CD4-positive, alpha-beta memory T cell (primary cell): ENCODE measurements at regions of chr4 and their contacts with region 1.

Region 1: DNA sequence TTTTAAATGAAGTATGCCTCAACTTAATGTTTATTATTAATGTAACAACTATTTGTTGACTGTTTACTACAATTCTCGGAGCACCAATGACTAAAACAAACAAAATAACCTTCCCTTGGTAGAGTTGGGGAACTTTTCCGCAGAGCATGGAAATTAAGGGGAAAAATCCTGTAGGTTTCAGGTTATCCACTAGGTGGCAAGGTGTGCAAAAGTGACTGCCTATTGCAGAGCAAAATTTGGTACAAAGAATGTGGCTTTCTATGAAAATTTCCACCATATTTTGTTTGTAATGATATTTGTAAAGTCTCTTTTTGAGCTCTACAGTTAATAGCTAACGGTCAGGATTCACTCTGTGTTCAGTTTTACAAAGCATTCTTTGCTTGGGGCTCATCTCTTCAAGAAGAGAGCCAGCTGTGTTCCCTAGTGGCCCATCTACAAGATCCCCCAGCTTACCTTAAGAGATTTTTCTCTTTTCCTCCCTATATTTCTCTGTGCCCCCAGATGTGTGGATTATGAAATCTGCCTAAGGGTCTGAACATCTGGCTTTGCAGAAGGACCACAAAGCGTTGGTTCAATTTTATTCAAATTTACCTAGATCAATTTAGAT is 61.1 kb downstream of the FBXO8 start:
- DNase-seq: peak in 1 of 5 donors; percentile 18
- H3K4me3 ChIP-seq: no peak overlapping the region
- H3K4me3 Mint-ChIP-seq: no peak overlapping the region
- H3K27ac ChIP-seq: no peak overlapping the region
- H3K27ac Mint-ChIP-seq: no peak overlapping the region
- H3K4me1 ChIP-seq: peaks cover 9% of the 10 kb centered on the region
- H3K4me1 Mint-ChIP-seq: peaks cover 5 to 10% (median 10%) of the 10 kb centered on the region in 4 donors
- H3K27me3 ChIP-seq: peaks cover 13% of the 10 kb centered on the region
- H3K27me3 Mint-ChIP-seq: peaks cover 19 to 26% of the 10 kb centered on the region in 2 donors

Region 2: DNA sequence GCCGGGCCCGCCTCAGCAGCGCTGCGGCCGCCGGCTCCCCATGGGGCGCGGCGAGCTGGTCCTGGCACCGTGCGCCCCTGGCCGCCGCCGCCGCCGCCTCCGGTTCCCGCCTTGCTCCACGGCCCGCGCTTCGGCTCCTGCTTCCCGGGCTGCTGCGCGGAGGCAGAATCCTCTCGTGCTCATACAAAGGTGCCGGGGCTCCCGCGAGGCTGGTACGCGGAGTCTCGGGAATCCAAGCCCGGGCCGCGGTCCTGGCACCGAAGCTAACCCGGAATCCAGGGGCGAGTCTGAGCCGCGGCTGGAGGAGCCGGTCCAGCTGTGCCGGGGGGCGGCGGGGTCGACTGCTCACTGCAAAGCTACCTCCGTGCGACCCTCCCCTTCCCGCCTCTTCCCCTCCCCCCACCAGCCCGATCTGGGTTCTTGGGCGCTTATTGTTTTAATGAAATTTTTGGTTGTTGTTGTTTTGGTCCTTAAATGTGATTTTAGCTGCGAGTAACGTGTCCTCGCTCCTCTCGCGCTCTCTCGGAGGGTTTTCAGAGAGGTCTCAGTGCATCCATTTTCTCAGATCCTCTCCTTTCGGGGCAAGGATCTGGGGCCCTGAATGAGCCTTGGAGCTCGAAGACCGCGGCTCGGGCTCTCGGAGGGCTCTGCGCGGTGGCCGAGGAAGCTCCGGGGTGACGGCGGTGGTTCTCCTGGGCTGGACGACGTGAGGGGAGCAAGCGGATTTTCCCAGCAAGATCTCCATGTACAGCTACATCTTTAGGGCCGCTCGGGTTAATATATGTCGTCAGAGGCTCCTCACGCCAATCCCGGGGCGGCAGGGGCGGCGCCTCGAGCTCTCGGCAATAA is 692.7 kb before region 1 on chr4 and contains the start of gene HAND2:
- CTCF ChIA-PET with region 1: no interaction called
- POLR2A ChIA-PET with region 1: no interaction called
- intact Hi-C with region 1: loop called (anchors 10 kb)
- DNase-seq: no peak
- H3K4me3 ChIP-seq: no peak within 1 kb of the TSS
- H3K4me3 Mint-ChIP-seq: peak within 1 kb of the TSS; percentile 47 to 82 (median 72)
- H3K27ac ChIP-seq: no peak within 1 kb of the TSS
- H3K27ac Mint-ChIP-seq: peak within 1 kb of the TSS in 3 of 7 donors; percentile 77 to 81 (median 78)
- H3K4me1 ChIP-seq: peaks cover 15% of the 10 kb centered on the region
- H3K4me1 Mint-ChIP-seq: peaks cover 11 to 31% (median 21%) of the 10 kb centered on the region in 4 donors
- H3K27me3 ChIP-seq: peaks cover 92% of the 10 kb centered on the region
- H3K27me3 Mint-ChIP-seq: peaks cover 71 to 76% of the 10 kb centered on the region in 2 donors
- total RNA-seq, gene HAND2: not detected

Region 3: GRCh38 chr4:174282836-174283506 is 60.6 kb after region 1 on chr4:
- CTCF ChIA-PET with region 1: interaction called, 3 read pairs
- POLR2A ChIA-PET with region 1: interaction called, 3 read pairs
- intact Hi-C with region 1: loop called (anchors 5 kb)
- DNase-seq: peak; percentile 84 to 92 (median 86)
- H3K4me3 ChIP-seq: peak overlapping the region; percentile 71 to 92
- H3K4me3 Mint-ChIP-seq: peak overlapping the region; percentile 96 to 100 (median 99)
- H3K27ac ChIP-seq: peak overlapping the region; percentile 97
- H3K27ac Mint-ChIP-seq: peak overlapping the region; percentile 98 to 100 (median 100)
- H3K4me1 ChIP-seq: peaks cover 59% of the 10 kb centered on the region
- H3K4me1 Mint-ChIP-seq: peaks cover 44 to 80% (median 61%) of the 10 kb centered on the region in 4 donors
- H3K27me3 ChIP-seq: no peaks in the 10 kb centered on the region
- H3K27me3 Mint-ChIP-seq: no peaks in the 10 kb centered on the region

Region 4: DNA sequence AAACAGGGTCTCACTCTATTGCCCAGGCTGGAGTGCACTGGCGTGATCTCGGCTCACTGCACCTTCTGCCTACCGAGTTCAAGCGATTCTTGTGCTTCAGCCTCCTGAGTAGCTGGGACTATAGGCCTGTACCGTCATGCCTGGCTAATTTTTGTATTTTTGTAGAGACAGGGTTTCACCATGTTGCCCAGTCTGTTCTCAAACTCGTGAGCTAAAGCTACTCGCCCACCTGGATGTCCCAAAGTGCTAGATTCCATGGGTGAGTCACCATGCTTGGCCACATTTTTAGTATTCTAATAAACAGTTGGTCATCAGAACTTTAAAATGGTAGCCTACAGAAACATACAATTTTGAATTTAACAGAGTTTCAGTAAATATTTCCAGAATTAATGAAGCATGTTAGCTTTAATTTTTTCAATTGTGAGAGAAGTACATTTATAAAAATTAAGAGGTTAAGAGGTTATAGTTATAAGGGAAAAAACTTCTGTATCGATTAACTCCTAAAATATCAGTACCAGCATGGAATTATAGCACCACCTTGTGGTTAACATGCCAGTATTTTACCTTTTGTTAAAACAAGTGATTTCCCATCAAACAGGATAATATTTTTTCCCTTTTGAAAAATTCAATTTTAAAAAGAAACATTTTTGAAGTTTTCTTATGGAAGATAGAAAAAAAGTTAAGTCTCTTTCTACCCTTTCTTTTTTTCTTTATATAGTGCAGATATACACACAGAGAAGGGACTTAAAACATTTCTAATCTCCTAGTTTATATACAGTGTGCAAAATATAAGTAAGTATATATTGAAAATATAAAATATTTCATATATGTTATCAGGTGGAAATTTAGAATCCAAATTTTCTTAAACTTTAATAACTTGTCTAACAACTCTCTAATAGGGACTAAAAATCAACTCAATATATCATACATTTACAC is 96.7 kb after region 1 on chr4:
- CTCF ChIA-PET with region 1: interaction called, 31 read pairs
- POLR2A ChIA-PET with region 1: no interaction called
- intact Hi-C with region 1: loop called (anchors 1 kb)
- DNase-seq: peak in 4 of 5 donors; percentile 25 to 43 (median 26)
- H3K4me3 ChIP-seq: no peak overlapping the region
- H3K4me3 Mint-ChIP-seq: no peak overlapping the region
- H3K27ac ChIP-seq: no peak overlapping the region
- H3K27ac Mint-ChIP-seq: no peak overlapping the region
- H3K4me1 ChIP-seq: no peaks in the 10 kb centered on the region
- H3K4me1 Mint-ChIP-seq: no peaks in the 10 kb centered on the region
- H3K27me3 ChIP-seq: no peaks in the 10 kb centered on the region
- H3K27me3 Mint-ChIP-seq: no peaks in the 10 kb centered on the region

Region 5: GRCh38 chr4:174631901-174632758 is 409.8 kb after region 1 on chr4:
- CTCF ChIA-PET with region 1: no interaction called
- POLR2A ChIA-PET with region 1: no interaction called
- intact Hi-C with region 1: loop called (anchors 5 kb)
- DNase-seq: peak in 4 of 5 donors; percentile 4 to 25 (median 13)
- H3K4me3 ChIP-seq: no peak overlapping the region
- H3K4me3 Mint-ChIP-seq: no peak overlapping the region
- H3K27ac ChIP-seq: no peak overlapping the region
- H3K27ac Mint-ChIP-seq: no peak overlapping the region
- H3K4me1 ChIP-seq: no peaks in the 10 kb centered on the region
- H3K4me1 Mint-ChIP-seq: peaks cover 0 to 4% (median 1%) of the 10 kb centered on the region in 4 donors
- H3K27me3 ChIP-seq: no peaks in the 10 kb centered on the region
- H3K27me3 Mint-ChIP-seq: no peaks in the 10 kb centered on the region